Dendritic cell treated with granulocyte-macrophage colony-stimulating factor and Interleukin-4, amounts not matched to agents 40 ng/mL and 50 ng/mL, for 4 days (primary cell): ENCODE measurements at regions of chr17 and their contacts with region 1.

Region 1: GRCh38 chr17:20073055-20073979 is 64.2 kb downstream of the SPECC1 start:
- H3K4me3 Mint-ChIP-seq: peak overlapping the region; percentile 68
- H3K27ac Mint-ChIP-seq: peak overlapping the region; percentile 77
- H3K4me1 Mint-ChIP-seq: peaks cover 77% of the 10 kb centered on the region
- H3K27me3 Mint-ChIP-seq: no peaks in the 10 kb centered on the region

Region 2: DNA sequence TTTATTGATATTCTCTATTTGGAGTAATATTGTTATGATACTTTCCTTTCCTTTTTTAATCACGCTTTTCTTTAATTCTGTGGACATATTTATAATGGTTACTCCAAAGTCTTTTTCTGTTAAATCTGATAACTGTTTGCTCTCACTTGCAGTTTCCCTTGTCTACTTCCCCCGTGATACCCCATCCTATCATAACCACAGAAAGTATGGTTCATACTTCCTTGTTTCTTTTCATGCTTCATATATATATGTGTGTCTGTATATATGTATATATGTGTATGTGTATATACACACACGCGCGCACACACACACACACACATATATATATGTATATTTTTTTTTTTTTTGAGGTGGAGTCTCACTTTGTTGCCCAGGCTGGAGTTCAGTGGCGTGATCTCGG is 40.7 kb before region 1 on chr17:
- intact Hi-C with region 1: loop called (anchors 5 kb)
- H3K4me3 Mint-ChIP-seq: peak overlapping the region; percentile 42
- H3K27ac Mint-ChIP-seq: peak overlapping the region; percentile 62
- H3K4me1 Mint-ChIP-seq: peaks cover 36% of the 10 kb centered on the region
- H3K27me3 Mint-ChIP-seq: no peaks in the 10 kb centered on the region

Region 3: GRCh38 chr17:20043021-20043420 is 30.3 kb before region 1 on chr17:
- intact Hi-C with region 1: no loop called
- H3K4me3 Mint-ChIP-seq: no peak overlapping the region
- H3K27ac Mint-ChIP-seq: no peak overlapping the region
- H3K4me1 Mint-ChIP-seq: peaks cover 15% of the 10 kb centered on the region
- H3K27me3 Mint-ChIP-seq: no peaks in the 10 kb centered on the region

Region 4: GRCh38 chr17:20174588-20175265 is 101.4 kb after region 1 on chr17:
- intact Hi-C with region 1: no loop called
- H3K4me3 Mint-ChIP-seq: no peak overlapping the region
- H3K27ac Mint-ChIP-seq: no peak overlapping the region
- H3K4me1 Mint-ChIP-seq: peaks cover 19% of the 10 kb centered on the region
- H3K27me3 Mint-ChIP-seq: no peaks in the 10 kb centered on the region